ENCODE measurements at regions of chr21 and their contacts with region 1.

Region 1: DNA sequence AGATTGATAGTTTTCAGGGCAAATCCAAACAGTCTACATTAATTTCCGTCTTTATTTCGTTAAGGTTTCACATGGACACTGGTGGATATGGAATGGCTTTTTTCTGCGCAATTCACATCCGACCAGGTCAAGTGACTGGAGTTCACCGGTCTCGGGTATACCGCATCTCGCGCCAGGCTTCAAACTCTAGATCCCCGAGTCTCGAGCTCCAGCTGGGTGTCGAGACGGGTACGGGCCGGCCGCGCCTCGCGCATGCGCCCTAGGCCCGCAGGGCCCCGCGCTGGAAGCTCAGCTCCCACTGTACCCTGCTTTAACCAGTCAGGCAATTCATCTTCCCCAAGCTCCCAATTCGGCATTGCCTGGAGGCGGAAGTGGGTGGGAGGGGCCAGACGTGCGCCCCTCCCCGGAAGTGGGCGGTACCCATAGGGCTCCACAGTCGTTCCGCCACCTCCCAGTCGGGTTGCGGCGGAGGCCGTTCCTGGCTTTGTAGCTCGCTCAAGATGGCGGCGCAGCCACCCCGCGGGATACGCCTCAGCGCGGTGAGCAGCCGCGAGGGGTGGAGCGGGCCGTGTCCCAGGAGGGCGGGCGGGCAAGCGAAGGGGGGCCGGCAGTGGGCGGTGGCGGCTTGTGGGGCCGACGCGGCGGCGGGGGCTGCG is at the start of gene MORC3:
- DNase-seq: peak; percentile 98
- ATAC-seq: peak; percentile 97
- total RNA-seq, gene MORC3: 19.2 to 20.2 TPM

Region 2: DNA sequence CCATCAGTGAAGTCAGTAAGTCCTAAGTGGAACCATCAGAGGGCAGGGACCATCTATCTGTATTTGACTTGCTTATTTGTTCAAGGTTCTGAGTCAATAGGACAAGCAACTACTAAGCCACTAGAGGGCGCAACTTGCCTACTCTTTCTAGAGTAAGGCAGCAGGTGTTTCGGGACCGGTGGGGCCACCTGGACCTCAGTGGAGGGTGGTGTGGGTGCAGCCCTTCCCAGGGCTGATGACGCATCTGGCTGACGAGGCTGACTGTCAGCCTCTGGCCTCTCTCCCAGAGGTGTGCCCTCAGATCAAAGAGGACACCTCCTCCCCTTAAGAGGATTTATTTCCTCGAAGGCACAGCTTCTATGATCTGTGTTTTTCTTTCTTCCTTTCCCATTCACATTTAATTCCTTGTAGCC is 178.4 kb before region 1 on chr21:
- intact Hi-C with region 1: loop called in 1 of 2 experiments (anchors 10 kb)
- DNase-seq: peak; percentile 79
- ATAC-seq: peak; percentile 87 to 94

Region 3: GRCh38 chr21:36156339-36156814 is 163.5 kb before region 1 on chr21:
- intact Hi-C with region 1: loop called in 1 of 2 experiments (anchors 5 kb)
- DNase-seq: peak; percentile 99
- ATAC-seq: peak; percentile 94 to 96

Region 4: GRCh38 chr21:36218691-36219090 is 101.2 kb before region 1 on chr21:
- intact Hi-C with region 1: no loop called
- DNase-seq: no peak
- ATAC-seq: no peak

Region 5: DNA sequence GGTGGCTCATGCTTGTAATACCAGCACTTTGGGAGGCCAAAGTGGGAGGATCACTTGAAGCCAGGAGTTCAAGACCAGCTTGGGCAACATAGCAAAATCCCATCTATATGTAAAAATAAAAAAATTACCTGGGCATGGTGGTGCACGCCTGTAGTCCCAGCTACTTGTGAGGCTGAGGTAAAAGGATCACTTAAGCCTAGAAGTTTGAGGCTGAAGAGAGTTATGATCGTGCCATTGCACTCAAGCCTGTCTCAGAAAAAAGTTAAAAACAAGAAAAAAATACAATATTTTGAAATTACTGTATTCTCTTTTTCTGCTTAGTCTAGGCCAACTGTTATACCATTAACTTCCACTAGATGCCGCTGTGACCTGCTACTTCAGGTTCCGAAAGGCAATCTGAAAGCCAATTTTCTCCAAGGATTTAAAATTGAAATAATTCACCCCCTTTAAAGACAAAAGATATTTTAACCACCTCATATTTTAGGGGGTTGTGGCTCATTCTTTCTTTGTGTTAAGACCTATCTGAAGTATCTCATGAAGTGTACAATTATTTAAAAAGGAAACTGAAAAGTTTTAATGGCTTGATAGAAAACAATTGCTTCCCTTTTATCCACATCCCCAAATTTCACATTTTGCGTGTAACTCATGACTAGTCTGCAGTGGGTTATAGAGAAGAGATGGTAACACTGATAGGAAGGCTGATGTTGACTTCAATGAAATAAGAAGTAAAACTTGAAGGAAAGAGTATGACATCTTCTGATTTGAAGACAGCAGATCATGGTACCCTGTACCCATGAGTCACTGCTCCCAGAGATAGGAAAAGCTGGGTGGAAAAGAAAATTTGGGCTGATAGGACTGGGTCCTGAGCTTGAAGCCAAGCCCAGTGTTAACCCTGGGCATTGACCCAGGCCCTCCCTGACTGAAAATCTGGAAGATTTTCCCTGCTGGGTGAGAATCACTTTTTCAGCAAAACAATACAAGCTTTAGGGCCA is 184.5 kb after region 1 on chr21:
- intact Hi-C with region 1: no loop called
- DNase-seq: no peak
- ATAC-seq: peak in 1 of 2 donors; percentile 76

Measured in left cardiac atrium (tissue), 4 donors.